Cardiac septum (tissue), 1 donor: ENCODE measurements at regions of chr16 and their contacts with region 1.

Region 1: GRCh38 chr16:48949636-48950035 is 332.0 kb downstream of the CBLN1 start:
- DNase-seq: no peak

Region 2: GRCh38 chr16:48845261-48845660 is 104.4 kb before region 1 on chr16:
- intact Hi-C with region 1: no loop called
- DNase-seq: no peak

Region 3: GRCh38 chr16:49012961-49013726 is 63.5 kb after region 1 on chr16:
- intact Hi-C with region 1: loop called (anchors 5 kb)
- DNase-seq: peak; percentile 90